Activated T-helper 2 cell treated with anti-CD3 and anti-CD28 coated beads, Interferon-gamma antibody, Interleukin-2, Interleukin-4, amounts not matched to agents 10 μg/mL and 5 μg/mL and 100 μg/mL, durations not matched to agents 14 hours and 24 hours and 36 hours (primary cell): ENCODE measurements at regions of chr3 and their contacts with region 1.

Region 1: DNA sequence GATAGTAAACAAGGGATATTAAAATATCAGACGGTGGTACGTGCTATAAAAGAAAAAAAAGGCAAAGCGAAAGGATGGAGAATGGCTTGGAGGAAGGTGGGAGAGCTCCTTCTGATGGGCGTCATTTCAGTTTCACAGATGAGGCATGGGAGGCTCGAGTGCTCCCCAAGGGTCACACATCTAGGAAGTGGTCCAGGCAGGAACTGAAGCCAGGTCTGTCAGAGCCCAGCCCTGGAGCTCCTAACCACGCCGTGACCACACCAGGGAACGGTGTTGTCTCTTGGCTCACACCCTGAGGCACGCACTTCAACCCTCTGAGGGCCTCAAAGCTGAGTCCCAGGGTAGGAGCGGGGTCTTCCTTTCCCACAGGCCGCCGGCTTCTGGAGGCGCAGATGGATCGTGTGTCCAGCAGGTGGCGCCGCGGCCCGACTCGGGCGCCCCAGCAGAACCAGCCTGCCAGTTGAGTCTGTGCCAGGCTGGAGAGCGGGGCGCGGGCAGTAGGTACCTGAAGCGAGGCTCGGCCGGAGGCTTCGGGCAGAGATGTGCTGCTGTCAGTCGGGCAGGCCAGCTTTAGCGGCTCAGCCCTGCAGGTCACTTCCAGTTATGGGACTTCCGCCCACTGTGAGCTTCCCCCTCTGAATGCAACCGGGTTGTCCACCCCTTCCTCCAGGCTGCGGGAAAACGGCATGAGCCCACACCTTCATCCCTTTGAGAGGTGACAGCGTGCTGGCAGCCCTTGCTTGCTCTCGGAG is 68.1 kb downstream of the SLC6A1 start:
- DNase-seq: peak; percentile 31
- H3K4me3 Mint-ChIP-seq: no peak overlapping the region
- H3K27ac Mint-ChIP-seq: no peak overlapping the region
- H3K4me1 Mint-ChIP-seq: no peaks in the 10 kb centered on the region
- H3K27me3 Mint-ChIP-seq: peaks cover 6% of the 10 kb centered on the region

Region 2: GRCh38 chr3:10758304-10759061 is 302.2 kb before region 1 on chr3:
- intact Hi-C with region 1: loop called (anchors 2 kb)
- DNase-seq: peak; percentile 25
- H3K4me3 Mint-ChIP-seq: no peak overlapping the region
- H3K27ac Mint-ChIP-seq: no peak overlapping the region
- H3K4me1 Mint-ChIP-seq: peaks cover 5% of the 10 kb centered on the region
- H3K27me3 Mint-ChIP-seq: peaks cover 12% of the 10 kb centered on the region

Region 3: DNA sequence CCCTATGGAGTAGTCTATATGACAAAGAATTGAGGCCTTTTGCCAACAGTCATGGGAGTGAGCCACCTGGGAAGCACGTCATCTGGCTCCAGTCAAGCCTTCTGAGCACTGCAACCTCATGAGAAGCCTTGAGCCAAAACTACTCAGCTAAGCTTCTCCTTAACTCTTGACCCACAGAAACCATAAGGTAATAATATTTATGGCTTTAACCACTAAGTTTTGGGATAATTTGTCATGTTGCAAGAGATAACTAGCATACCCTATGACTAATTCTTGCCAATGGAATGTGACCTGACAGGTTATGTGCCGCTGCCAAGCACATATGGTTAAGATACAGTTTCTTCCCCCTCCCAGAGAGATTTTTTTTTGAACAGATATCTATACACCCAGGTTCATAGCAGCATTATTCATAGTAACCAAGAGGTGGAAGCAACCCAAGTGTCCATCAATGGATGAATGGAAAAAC is 256.5 kb before region 1 on chr3:
- intact Hi-C with region 1: no loop called
- DNase-seq: no peak
- H3K4me3 Mint-ChIP-seq: no peak overlapping the region
- H3K27ac Mint-ChIP-seq: no peak overlapping the region
- H3K4me1 Mint-ChIP-seq: no peaks in the 10 kb centered on the region
- H3K27me3 Mint-ChIP-seq: peaks cover 2% of the 10 kb centered on the region

Region 4: GRCh38 chr3:10945683-10946287 is 114.9 kb before region 1 on chr3:
- intact Hi-C with region 1: loop called (anchors 1 kb)
- DNase-seq: peak; percentile 34
- H3K4me3 Mint-ChIP-seq: no peak overlapping the region
- H3K27ac Mint-ChIP-seq: no peak overlapping the region
- H3K4me1 Mint-ChIP-seq: no peaks in the 10 kb centered on the region
- H3K27me3 Mint-ChIP-seq: no peaks in the 10 kb centered on the region

Region 5: GRCh38 chr3:11077466-11077865 is 16.8 kb after region 1 on chr3:
- intact Hi-C with region 1: no loop called
- DNase-seq: no peak
- H3K4me3 Mint-ChIP-seq: no peak overlapping the region
- H3K27ac Mint-ChIP-seq: no peak overlapping the region
- H3K4me1 Mint-ChIP-seq: no peaks in the 10 kb centered on the region
- H3K27me3 Mint-ChIP-seq: peaks cover 16% of the 10 kb centered on the region

Region 6: DNA sequence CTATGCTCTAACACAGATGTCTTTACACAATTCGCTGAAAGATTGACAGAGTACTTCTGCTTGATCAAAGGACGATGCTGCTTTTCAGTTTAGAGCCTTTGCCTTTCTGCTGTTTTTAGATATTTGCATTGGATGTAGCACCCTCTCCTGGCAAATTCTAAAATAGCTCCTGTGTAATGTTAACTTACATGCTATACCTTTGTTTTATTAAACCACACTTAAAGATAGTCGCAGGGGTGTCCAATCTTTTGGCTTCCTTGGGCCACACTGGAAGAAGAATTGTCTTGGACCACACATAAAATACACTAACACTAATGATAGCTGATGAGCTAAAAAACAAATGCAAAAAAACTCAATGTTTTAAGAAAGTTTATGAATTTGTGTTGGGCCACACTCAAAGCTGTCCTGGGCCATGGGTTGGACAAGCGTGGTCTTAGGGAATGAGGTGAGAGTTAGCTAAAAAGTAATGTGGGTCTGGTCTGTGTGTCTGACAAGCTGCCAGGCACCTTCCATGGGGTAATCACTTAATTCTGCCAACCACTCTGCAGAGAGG is 274.5 kb after region 1 on chr3:
- intact Hi-C with region 1: loop called (anchors 1 kb)
- DNase-seq: no peak
- H3K4me3 Mint-ChIP-seq: no peak overlapping the region
- H3K27ac Mint-ChIP-seq: no peak overlapping the region
- H3K4me1 Mint-ChIP-seq: peaks cover 10% of the 10 kb centered on the region
- H3K27me3 Mint-ChIP-seq: no peaks in the 10 kb centered on the region

Region 7: GRCh38 chr3:11651900-11652299 is 591.2 kb after region 1 on chr3:
- intact Hi-C with region 1: loop called (anchors 5 kb)
- DNase-seq: no peak
- H3K4me3 Mint-ChIP-seq: no peak overlapping the region
- H3K27ac Mint-ChIP-seq: no peak overlapping the region
- H3K4me1 Mint-ChIP-seq: peaks cover 9% of the 10 kb centered on the region
- H3K27me3 Mint-ChIP-seq: peaks cover 8% of the 10 kb centered on the region

Region 8: GRCh38 chr3:12454076-12454815 is 1393.6 kb after region 1 on chr3:
- intact Hi-C with region 1: no loop called
- DNase-seq: no peak
- H3K4me3 Mint-ChIP-seq: no peak overlapping the region
- H3K27ac Mint-ChIP-seq: no peak overlapping the region
- H3K4me1 Mint-ChIP-seq: no peaks in the 10 kb centered on the region
- H3K27me3 Mint-ChIP-seq: no peaks in the 10 kb centered on the region